ENCODE measurements at regions of chr16 and their contacts with region 1.

Region 1: GRCh38 chr16:57413301-57413730 is 8.7 kb downstream of the CCL17 start:
- DNase-seq: peak in 1 of 5 donors; percentile 55
- H3K4me3 ChIP-seq: no peak overlapping the region
- H3K27ac ChIP-seq: no peak overlapping the region
- H3K4me1 ChIP-seq: peaks cover 0 to 15% (median 0%) of the 10 kb centered on the region in 3 donors
- H3K27me3 ChIP-seq: no peaks in the 10 kb centered on the region
- CTCF ChIP-seq: no peak

Region 2: DNA sequence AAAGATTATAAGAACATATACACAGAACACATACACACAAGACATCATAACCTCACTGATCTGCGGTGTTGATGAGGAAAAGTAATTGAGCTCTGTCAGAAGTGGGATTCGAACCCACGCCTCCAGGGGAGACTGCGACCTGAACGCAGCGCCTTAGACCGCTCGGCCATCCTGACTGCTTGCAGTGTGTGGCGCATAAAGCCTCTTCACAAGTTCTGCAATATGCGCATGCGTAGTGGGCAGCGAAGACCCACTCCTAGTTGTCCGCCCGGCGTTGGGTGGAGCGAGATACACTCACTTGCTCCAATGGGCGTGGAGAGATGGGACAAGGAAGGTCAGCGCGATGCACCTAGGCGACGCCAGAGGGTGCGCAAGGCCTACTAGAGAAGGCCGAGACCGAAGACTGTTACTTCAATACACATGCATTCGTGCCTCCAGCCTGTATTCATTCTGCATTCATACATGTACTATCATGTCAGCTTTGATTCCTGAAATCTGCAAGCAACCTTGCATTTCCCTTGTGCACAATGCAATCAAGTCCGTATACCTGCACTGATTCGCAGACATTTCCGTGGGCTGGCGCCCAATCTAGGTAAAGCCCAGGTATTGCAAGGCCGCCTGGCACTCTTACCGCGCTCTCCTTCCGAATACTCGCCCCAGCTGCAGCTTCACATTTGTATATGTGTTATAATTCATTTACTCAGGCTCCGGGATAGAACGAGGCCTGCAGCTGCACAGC is 112.8 kb before region 1 on chr16:
- intact Hi-C with region 1: loop called (anchors 5 kb)
- DNase-seq: peak; percentile 100
- H3K4me3 ChIP-seq: peak overlapping the region; percentile 65 to 72 (median 66)
- H3K27ac ChIP-seq: peak overlapping the region; percentile 81 to 96
- H3K4me1 ChIP-seq: peaks cover 0 to 21% (median 14%) of the 10 kb centered on the region in 3 donors
- H3K27me3 ChIP-seq: no peaks in the 10 kb centered on the region
- CTCF ChIP-seq: peak; percentile 98

Region 3: GRCh38 chr16:57519796-57520360 is 106.6 kb after region 1 on chr16:
- intact Hi-C with region 1: loop called (anchors 10 kb)
- DNase-seq: peak; percentile 85 to 90 (median 86)
- H3K4me3 ChIP-seq: no peak overlapping the region
- H3K27ac ChIP-seq: no peak overlapping the region
- H3K4me1 ChIP-seq: peaks cover 0 to 2% (median 0%) of the 10 kb centered on the region in 3 donors
- H3K27me3 ChIP-seq: no peaks in the 10 kb centered on the region
- CTCF ChIP-seq: peak; percentile 95